Astrocyte of the cerebellum (primary cell): ENCODE measurements at regions of chr10 and their contacts with region 1.

Region 1: GRCh38 chr10:104201636-104202035 is 30.5 kb downstream of the CFAP43 start:
- DNase-seq: no peak
- H3K4me3 ChIP-seq: no peak overlapping the region
- CTCF ChIP-seq: no peak

Region 2: DNA sequence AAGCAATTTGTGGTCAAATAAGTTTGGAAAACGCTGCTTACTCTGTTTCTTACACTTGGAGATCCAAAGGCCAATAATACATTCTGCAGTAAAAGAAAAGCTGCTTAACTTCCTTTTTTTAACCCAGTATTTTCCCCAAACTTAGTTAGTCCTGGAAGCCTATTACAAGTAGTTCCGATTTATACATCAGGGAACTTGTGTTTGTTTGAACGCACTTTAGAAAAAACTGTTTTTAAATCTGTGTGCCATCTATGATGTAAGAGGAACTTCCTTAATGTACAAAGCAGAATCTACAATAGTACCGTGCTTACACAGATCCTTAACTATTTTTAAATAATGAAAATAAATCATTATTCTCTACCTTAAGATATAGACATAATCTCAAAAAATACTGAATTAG is 56.7 kb before region 1 on chr10:
- in situ Hi-C with region 1: loop called (anchors 5 kb)
- DNase-seq: no peak
- H3K4me3 ChIP-seq: no peak overlapping the region
- CTCF ChIP-seq: no peak